AG04449 (cell line): ENCODE measurements at regions of chr18 and their contacts with region 1.

Region 1: DNA sequence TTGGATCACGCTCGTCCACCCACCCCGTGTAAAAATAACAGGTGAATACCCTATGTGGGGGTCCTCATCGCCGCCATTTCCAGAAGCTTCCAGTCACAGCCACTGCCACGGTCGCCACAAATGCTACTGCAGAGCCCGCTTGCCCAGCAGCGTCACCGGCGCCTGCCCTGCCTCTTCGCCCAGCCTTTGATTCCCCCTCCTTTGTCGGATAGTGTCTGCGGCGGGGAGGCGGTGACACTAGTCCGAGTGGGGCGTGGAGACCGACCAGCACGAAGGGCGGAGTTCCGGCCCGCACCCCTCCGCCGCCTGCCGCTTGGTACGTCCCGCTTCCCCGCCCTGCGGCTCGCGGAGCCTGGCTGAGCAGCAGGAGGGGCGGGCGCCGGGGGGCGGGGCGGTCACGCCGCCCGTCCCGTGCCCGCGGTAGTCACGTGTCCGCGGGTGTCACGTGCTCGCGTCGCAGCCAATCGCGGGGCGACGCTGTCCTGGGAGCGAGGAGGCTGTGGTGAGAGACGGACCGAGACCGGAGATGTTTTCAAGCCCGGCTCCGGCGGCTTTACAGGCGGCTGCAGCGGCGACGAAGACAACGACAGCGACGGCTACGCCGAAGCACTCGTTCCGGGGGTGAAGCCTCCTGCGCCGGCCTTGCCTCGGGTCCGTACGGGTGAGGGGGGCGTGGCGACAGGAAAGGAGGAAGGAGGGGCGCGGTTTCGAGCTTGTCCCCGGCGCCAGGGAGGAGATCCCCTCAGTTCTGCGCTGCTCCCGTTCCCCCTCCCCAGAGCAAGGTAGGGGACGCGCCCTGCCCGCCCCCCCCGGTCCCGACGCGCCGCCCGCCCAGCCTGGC is at the start of gene ANKRD12:
- DNase-seq: peak; percentile 82
- H3K4me3 ChIP-seq: peak within 1 kb of the TSS; percentile 93
- CTCF ChIP-seq: no peak

Region 2: GRCh38 chr18:9066817-9067306 is 69.7 kb before region 1 on chr18:
- CTCF ChIA-PET with region 1: interaction called, 25 read pairs
- POLR2A ChIA-PET with region 1: no interaction called
- DNase-seq: no peak
- H3K4me3 ChIP-seq: no peak overlapping the region
- CTCF ChIP-seq: no peak

Region 3: DNA sequence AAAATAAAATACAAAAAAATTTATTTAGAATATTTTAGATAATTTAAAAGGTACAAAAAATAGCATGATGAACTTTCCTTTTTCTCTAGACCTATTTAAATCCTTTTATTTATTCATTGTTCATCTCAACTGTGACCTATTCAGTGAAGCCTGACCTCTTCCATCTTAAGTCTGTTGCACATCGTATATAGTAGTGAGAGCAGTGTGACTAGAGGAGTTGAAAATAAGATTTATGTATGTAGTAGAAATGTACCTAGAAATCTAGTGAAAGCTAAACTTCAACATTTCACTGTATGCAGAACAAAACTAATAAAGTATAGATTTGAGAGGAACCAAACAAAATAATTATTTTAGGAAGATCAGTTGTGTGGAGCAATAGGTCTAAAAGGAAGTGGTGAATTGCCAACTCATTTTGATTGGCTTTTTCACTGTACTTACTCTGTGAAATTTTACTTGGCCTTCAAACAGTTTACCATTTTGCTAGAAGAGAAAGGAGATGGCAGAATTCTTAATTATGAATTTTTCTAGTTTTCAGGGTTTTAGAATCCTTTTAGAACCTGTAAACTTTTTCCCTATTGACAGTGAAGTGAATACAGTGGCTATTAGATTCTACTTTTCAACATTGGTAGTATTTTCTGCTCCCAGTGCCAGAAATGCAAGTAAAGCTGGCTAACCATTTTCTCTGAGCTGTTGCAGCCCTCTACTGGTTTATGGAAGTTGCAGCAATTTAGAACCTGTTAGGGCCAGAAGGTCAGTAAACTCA is 11.1 kb after region 1 on chr18:
- CTCF ChIA-PET with region 1: interaction called, 14 read pairs
- POLR2A ChIA-PET with region 1: interaction called, 3 read pairs
- DNase-seq: peak; percentile 28
- H3K4me3 ChIP-seq: no peak overlapping the region
- CTCF ChIP-seq: peak; percentile 66